CD8-positive, alpha-beta T cell (primary cell): ENCODE measurements at regions of chr3 and their contacts with region 1.

Region 1: GRCh38 chr3:65689426-65689825 is 349.3 kb downstream of the MAGI1 start:
- DNase-seq: no peak
- ATAC-seq: no peak
- H3K4me3 ChIP-seq: no peak overlapping the region
- H3K4me3 Mint-ChIP-seq: no peak overlapping the region
- H3K27ac ChIP-seq: no peak overlapping the region
- H3K27ac Mint-ChIP-seq: no peak overlapping the region
- H3K4me1 ChIP-seq: no peaks in the 10 kb centered on the region
- H3K4me1 Mint-ChIP-seq: no peaks in the 10 kb centered on the region
- H3K27me3 ChIP-seq: no peaks in the 10 kb centered on the region
- H3K27me3 Mint-ChIP-seq: no peaks in the 10 kb centered on the region
- CTCF ChIP-seq: no peak

Region 2: GRCh38 chr3:65521032-65521431 is 168.4 kb before region 1 on chr3:
- CTCF ChIA-PET with region 1: no interaction called
- POLR2A ChIA-PET with region 1: no interaction called
- intact Hi-C with region 1: no loop called
- DNase-seq: no peak
- ATAC-seq: no peak
- H3K4me3 ChIP-seq: no peak overlapping the region
- H3K4me3 Mint-ChIP-seq: no peak overlapping the region
- H3K27ac ChIP-seq: no peak overlapping the region
- H3K27ac Mint-ChIP-seq: no peak overlapping the region
- H3K4me1 ChIP-seq: no peaks in the 10 kb centered on the region
- H3K4me1 Mint-ChIP-seq: no peaks in the 10 kb centered on the region
- H3K27me3 ChIP-seq: no peaks in the 10 kb centered on the region
- H3K27me3 Mint-ChIP-seq: no peaks in the 10 kb centered on the region
- CTCF ChIP-seq: no peak

Region 3: GRCh38 chr3:65728138-65728537 is 38.7 kb after region 1 on chr3:
- CTCF ChIA-PET with region 1: no interaction called
- POLR2A ChIA-PET with region 1: no interaction called
- intact Hi-C with region 1: no loop called
- DNase-seq: no peak
- ATAC-seq: no peak
- H3K4me3 ChIP-seq: no peak overlapping the region
- H3K4me3 Mint-ChIP-seq: no peak overlapping the region
- H3K27ac ChIP-seq: no peak overlapping the region
- H3K27ac Mint-ChIP-seq: no peak overlapping the region
- H3K4me1 ChIP-seq: no peaks in the 10 kb centered on the region
- H3K4me1 Mint-ChIP-seq: peaks cover 4% of the 10 kb centered on the region
- H3K27me3 ChIP-seq: no peaks in the 10 kb centered on the region
- H3K27me3 Mint-ChIP-seq: peaks cover 3% of the 10 kb centered on the region
- CTCF ChIP-seq: no peak

Region 4: GRCh38 chr3:65751123-65751700 is 61.8 kb after region 1 on chr3:
- CTCF ChIA-PET with region 1: no interaction called
- POLR2A ChIA-PET with region 1: no interaction called
- intact Hi-C with region 1: loop called in 1 of 2 experiments (anchors 2 kb)
- DNase-seq: no peak
- ATAC-seq: no peak
- H3K4me3 ChIP-seq: no peak overlapping the region
- H3K4me3 Mint-ChIP-seq: no peak overlapping the region
- H3K27ac ChIP-seq: no peak overlapping the region
- H3K27ac Mint-ChIP-seq: no peak overlapping the region
- H3K4me1 ChIP-seq: no peaks in the 10 kb centered on the region
- H3K4me1 Mint-ChIP-seq: no peaks in the 10 kb centered on the region
- H3K27me3 ChIP-seq: no peaks in the 10 kb centered on the region
- H3K27me3 Mint-ChIP-seq: no peaks in the 10 kb centered on the region
- CTCF ChIP-seq: no peak